Activated CD4-positive, alpha-beta T cell treated with anti-CD3 and anti-CD28 coated beads, Interleukin-2, amount 10 ng/mL, durations not matched to agents 7 days and 5 days (primary cell): ENCODE measurements at regions of chr1 and their contacts with region 1.

Region 1: GRCh38 chr1:203625628-203626019 is 1.0 kb upstream of the ATP2B4 start:
- DNase-seq: peak; percentile 81
- H3K4me3 Mint-ChIP-seq: peak overlapping the region; percentile 94
- H3K27ac Mint-ChIP-seq: peak overlapping the region; percentile 90
- H3K4me1 Mint-ChIP-seq: peaks cover 67% of the 10 kb centered on the region
- H3K27me3 Mint-ChIP-seq: no peaks in the 10 kb centered on the region

Region 2: DNA sequence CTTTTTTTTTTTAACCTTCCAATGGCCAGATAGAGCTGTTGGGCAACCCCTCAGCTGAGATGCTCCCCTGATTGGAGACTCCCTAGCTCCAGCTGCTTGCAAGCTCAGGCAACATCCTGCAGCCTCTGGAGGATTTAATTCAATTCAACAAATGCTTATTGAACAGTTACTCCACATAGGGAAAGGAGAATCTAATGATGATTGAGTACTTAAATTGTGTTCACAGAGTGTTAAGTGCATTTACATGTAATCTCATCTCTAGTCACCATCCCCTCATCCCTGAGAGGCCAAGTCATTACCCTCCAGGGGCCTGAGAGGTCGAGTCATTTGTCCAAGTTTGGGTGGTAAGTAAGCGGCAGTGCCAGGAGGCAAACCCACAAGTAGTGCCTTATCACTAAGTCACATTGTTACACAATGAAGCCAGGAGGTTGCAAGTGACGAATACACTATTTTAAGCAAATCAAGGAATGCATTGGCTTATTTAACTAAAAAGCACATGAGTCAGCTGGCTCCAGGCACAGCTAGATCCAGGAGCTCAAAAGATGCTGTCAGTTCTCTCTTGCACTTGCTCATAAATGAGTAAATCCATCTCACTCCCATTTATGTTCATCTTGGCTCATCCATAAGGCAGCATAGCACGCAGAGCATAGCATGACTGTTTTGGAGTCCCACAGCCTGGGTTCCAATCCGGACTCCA is 67.4 kb before region 1 on chr1:
- CTCF ChIA-PET with region 1: no interaction called
- POLR2A ChIA-PET with region 1: no interaction called
- DNase-seq: no peak
- H3K4me3 Mint-ChIP-seq: no peak overlapping the region
- H3K27ac Mint-ChIP-seq: no peak overlapping the region
- H3K4me1 Mint-ChIP-seq: peaks cover 3% of the 10 kb centered on the region
- H3K27me3 Mint-ChIP-seq: peaks cover 11% of the 10 kb centered on the region

Region 3: DNA sequence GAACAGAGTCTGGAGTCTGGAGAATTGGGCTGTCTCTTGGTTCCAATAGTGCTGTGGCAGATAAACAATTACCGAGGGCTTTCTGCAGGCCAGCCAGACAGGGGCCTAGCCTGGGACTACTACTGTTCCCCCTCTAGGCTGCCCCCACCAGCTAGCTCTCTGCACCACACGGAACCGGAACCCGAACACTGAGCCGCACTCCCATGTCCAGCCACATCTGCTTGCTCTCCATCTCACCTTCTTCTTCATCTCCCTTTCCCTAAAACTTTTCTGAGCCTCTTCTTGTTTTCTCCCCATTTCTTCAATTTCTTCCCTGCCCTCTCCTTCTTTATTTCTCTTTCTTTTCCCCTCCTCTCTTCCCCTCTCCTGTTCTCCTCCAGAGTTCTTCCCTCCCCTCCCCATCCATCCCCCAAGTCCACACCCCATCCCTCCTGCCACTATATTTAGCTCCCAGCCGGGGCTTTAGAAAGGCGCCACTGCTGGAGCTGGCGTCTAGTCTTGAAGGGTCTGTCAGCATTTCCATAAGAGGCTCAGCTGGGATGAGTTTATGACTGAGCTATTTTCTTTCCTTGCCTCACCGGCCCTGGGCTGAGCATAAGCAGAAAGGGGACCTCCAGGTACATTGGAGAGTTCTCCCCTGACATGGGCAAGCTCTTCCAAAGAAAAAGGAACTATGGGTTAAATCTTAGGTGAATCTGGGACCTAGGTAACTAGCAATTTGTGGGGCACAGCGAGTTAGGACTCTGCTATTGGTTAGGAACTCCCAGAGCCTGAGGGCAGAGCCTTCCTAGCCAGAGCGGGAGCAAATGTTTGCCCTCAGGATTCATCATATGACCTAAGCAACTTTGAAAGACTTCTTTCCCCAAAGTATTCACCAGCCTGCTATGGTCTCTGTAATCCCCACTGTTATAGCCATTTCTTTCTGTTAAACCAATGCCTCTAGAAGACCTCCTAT is 24.6 kb before region 1 on chr1:
- CTCF ChIA-PET with region 1: interaction called, 10 read pairs
- POLR2A ChIA-PET with region 1: interaction called, 3 read pairs
- DNase-seq: no peak
- H3K4me3 Mint-ChIP-seq: no peak overlapping the region
- H3K27ac Mint-ChIP-seq: peak overlapping the region; percentile 15
- H3K4me1 Mint-ChIP-seq: peaks cover 34% of the 10 kb centered on the region
- H3K27me3 Mint-ChIP-seq: peaks cover 5% of the 10 kb centered on the region

Region 4: GRCh38 chr1:203607533-203607873 is 18.1 kb before region 1 on chr1:
- CTCF ChIA-PET with region 1: interaction called, 18 read pairs
- POLR2A ChIA-PET with region 1: interaction called, 6 read pairs
- DNase-seq: no peak
- H3K4me3 Mint-ChIP-seq: no peak overlapping the region
- H3K27ac Mint-ChIP-seq: peak overlapping the region; percentile 94
- H3K4me1 Mint-ChIP-seq: peaks cover 63% of the 10 kb centered on the region
- H3K27me3 Mint-ChIP-seq: no peaks in the 10 kb centered on the region

Region 5: DNA sequence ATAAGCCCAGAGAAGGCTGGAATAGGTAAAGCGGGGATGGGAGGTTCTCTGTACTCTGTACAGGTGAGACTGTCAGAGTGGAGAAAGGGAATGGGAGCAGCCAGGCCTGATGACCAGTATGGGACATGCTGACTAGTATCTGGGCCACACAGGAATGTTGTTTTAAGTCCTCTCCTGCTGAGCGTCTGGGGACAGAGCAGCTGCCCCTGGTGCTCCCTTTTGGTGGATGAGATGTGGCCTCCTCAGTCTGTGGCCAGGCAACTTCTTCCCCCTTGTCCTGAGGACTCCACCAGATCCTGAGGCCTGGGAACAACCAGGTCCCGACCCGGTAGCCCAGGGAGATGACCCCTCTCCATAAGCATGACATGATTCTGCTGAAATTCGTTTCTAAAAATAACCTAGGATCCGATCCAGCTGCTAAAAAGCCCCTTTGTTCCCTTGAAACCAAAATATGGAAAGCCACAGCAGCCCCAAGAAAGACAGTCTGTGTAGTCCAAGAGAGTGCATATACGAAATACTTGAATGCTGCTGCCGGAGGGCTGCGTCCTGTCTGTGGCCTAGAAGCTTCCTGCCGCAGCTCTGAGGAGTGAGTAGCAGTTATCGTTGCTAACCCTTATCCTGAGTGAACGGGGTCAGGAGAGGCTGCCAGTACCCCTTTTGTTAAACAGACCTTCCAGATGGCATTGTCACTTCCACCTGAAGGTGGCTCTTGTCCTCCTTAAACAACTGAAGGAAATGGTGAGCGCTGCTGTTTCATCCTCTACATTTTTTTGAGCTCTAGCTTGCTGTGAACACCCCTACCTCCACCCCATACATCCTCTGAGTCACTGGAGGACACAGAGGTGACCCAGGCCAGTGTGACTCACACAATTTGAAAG is 48.2 kb after region 1 on chr1:
- CTCF ChIA-PET with region 1: interaction called, 4 read pairs
- POLR2A ChIA-PET with region 1: interaction called, 10 read pairs
- DNase-seq: peak; percentile 86
- H3K4me3 Mint-ChIP-seq: peak overlapping the region; percentile 36
- H3K27ac Mint-ChIP-seq: peak overlapping the region; percentile 96
- H3K4me1 Mint-ChIP-seq: peaks cover 63% of the 10 kb centered on the region
- H3K27me3 Mint-ChIP-seq: no peaks in the 10 kb centered on the region